MCF 10A (cell line): ENCODE measurements at regions of chr5 and their contacts with region 1.

Region 1: GRCh38 chr5:180328296-180329137 is 24.6 kb downstream of the GFPT2 start:
- DNase-seq: peak; percentile 97
- H3K4me3 Mint-ChIP-seq: no peak overlapping the region
- H3K27ac Mint-ChIP-seq: no peak overlapping the region
- H3K4me1 Mint-ChIP-seq: peaks cover 40% of the 10 kb centered on the region
- H3K27me3 Mint-ChIP-seq: no peaks in the 10 kb centered on the region
- CTCF ChIP-seq: peak; percentile 93

Region 2: DNA sequence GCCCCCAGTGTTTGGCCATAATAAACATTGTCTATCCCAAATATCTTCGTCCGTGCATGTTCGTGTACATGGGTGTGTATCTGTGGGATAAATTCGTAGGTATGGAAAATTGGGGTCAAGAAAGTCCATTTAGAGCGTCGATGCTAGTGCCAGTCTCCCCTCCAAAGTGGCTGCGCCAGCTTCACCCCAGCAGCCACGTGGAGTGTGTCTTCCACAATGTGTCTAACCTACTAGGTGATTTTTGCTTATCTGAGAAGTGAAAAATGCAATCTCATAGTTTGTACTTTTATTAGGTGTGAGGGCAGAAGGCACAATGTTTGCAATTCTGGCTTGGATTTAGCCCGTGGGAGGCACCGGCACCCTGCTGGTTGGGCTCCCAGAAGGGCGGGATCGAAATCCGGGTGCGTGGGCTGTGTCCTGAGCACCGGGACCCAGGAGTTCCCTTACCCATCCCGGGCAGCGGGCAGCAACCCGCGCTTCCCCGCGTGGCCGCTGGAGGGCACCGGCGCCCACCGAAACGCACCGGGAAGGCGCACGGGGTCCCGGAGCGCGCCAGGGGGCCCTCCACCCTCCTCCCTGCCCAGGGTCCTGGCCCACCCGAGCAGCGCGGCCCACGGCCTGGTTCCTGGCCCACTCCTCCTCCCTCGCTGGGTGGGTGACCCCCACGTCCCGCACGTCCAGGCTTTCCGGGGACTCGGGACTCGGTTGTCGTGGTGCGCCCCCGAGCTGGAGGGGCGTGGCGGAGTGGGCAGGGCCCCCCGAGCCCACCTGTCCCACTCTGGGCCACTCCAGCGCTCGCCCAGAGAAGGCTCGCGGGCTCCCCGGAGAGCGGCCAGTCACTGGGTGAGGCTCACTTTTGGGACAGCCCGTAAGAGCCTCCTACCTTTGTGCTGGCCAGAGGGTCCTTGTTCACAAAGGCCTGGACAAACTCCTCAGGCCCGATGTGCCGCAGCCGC is 201.5 kb before region 1 on chr5:
- CTCF ChIA-PET with region 1: interaction called, 13 read pairs
- POLR2A ChIA-PET with region 1: interaction called, 3 read pairs
- intact Hi-C with region 1: no loop called
- DNase-seq: peak; percentile 58
- H3K4me3 Mint-ChIP-seq: no peak overlapping the region
- H3K27ac Mint-ChIP-seq: no peak overlapping the region
- H3K4me1 Mint-ChIP-seq: peaks cover 17% of the 10 kb centered on the region
- H3K27me3 Mint-ChIP-seq: peaks cover 32% of the 10 kb centered on the region
- CTCF ChIP-seq: peak; percentile 99

Region 3: GRCh38 chr5:180304431-180305375 is 23.8 kb before region 1 on chr5:
- CTCF ChIA-PET with region 1: interaction called, 30 read pairs
- POLR2A ChIA-PET with region 1: no interaction called
- intact Hi-C with region 1: no loop called
- DNase-seq: no peak
- H3K4me3 Mint-ChIP-seq: no peak overlapping the region
- H3K27ac Mint-ChIP-seq: no peak overlapping the region
- H3K4me1 Mint-ChIP-seq: no peaks in the 10 kb centered on the region
- H3K27me3 Mint-ChIP-seq: peaks cover 12% of the 10 kb centered on the region
- CTCF ChIP-seq: no peak

Region 4: DNA sequence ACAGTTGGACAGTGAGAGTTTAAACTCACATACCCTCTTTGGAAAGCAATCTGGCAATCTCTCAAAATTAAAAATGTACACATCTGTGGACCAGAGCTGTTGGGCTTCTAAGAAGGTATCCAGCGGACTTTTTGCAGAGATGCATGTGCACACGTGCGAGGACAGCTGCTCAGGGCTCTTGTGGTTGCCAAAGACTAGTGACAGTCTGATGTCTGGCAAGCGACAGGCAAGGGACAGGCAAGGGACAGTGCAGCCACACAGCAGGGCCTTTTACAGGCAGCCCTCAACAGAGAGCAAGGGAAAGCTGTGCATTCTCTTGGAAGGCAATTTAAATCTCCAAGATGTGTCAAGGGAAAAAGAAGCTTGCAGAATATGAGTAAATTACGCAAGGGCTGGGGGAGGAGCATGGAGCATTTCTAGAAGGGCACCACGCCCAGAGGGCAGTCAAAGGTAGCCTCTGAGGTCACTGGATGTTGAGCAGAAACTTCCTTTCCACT is 15.4 kb after region 1 on chr5:
- CTCF ChIA-PET with region 1: interaction called, 28 read pairs
- POLR2A ChIA-PET with region 1: interaction called, 12 read pairs
- intact Hi-C with region 1: no loop called
- DNase-seq: peak; percentile 92
- H3K4me3 Mint-ChIP-seq: no peak overlapping the region
- H3K27ac Mint-ChIP-seq: no peak overlapping the region
- H3K4me1 Mint-ChIP-seq: peaks cover 8% of the 10 kb centered on the region
- H3K27me3 Mint-ChIP-seq: no peaks in the 10 kb centered on the region
- CTCF ChIP-seq: no peak

Region 5: GRCh38 chr5:180441563-180441962 is 113.0 kb after region 1 on chr5:
- CTCF ChIA-PET with region 1: interaction called, 3 read pairs
- POLR2A ChIA-PET with region 1: interaction called, 15 read pairs
- intact Hi-C with region 1: no loop called
- DNase-seq: peak; percentile 100
- H3K4me3 Mint-ChIP-seq: peak overlapping the region; percentile 58
- H3K27ac Mint-ChIP-seq: peak overlapping the region; percentile 88
- H3K4me1 Mint-ChIP-seq: peaks cover 15% of the 10 kb centered on the region
- H3K27me3 Mint-ChIP-seq: no peaks in the 10 kb centered on the region
- CTCF ChIP-seq: no peak

Region 6: GRCh38 chr5:180718810-180719453 is 390.4 kb after region 1 on chr5:
- CTCF ChIA-PET with region 1: interaction called, 4 read pairs
- POLR2A ChIA-PET with region 1: interaction called, 3 read pairs
- intact Hi-C with region 1: loop called (anchors 2 kb)
- DNase-seq: peak; percentile 62
- H3K4me3 Mint-ChIP-seq: no peak overlapping the region
- H3K27ac Mint-ChIP-seq: no peak overlapping the region
- H3K4me1 Mint-ChIP-seq: no peaks in the 10 kb centered on the region
- H3K27me3 Mint-ChIP-seq: peaks cover 62% of the 10 kb centered on the region
- CTCF ChIP-seq: peak; percentile 81

Region 7: DNA sequence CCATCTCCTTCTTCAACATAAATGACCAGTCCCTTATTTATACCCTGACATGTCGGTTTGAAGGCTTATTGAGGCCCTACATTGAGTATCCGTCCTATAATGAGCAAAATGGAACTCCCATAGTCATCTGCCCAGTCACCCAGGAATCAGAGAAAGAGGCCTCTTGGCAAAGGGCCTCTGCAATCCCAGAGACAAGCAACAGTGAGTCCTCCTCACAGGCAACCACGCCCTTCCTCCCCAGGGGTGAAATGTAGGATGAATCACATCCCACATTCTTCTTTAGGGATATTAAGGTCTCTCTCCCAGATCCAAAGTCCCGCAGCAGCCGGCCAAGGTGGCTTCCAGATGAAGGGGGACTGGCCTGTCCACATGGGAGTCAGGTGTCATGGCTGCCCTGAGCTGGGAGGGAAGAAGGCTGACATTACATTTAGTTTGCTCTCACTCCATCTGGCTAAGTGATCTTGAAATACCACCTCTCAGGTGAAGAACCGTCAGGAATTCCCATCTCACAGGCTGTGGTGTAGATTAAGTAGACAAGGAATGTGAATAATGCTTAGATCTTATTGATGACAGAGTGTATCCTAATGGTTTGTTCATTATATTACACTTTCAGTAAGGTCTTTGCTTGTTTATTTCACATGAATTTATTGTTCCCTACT is 621.9 kb after region 1 on chr5:
- CTCF ChIA-PET with region 1: no interaction called
- POLR2A ChIA-PET with region 1: no interaction called
- intact Hi-C with region 1: no loop called
- DNase-seq: peak; percentile 79
- H3K4me3 Mint-ChIP-seq: no peak overlapping the region
- H3K27ac Mint-ChIP-seq: peak overlapping the region; percentile 61
- H3K4me1 Mint-ChIP-seq: peaks cover 12% of the 10 kb centered on the region
- H3K27me3 Mint-ChIP-seq: no peaks in the 10 kb centered on the region
- CTCF ChIP-seq: no peak